PC-9 (cell line): ENCODE measurements at regions of chr17 and their contacts with region 1.

Region 1: GRCh38 chr17:70683936-70684335 is 514.6 kb downstream of the KCNJ2 start:
- DNase-seq: no peak
- H3K4me3 ChIP-seq: no peak overlapping the region
- H3K27ac ChIP-seq: no peak overlapping the region
- H3K4me1 ChIP-seq: peaks cover 12% of the 10 kb centered on the region
- H3K27me3 ChIP-seq: no peaks in the 10 kb centered on the region
- CTCF ChIP-seq: no peak

Region 2: DNA sequence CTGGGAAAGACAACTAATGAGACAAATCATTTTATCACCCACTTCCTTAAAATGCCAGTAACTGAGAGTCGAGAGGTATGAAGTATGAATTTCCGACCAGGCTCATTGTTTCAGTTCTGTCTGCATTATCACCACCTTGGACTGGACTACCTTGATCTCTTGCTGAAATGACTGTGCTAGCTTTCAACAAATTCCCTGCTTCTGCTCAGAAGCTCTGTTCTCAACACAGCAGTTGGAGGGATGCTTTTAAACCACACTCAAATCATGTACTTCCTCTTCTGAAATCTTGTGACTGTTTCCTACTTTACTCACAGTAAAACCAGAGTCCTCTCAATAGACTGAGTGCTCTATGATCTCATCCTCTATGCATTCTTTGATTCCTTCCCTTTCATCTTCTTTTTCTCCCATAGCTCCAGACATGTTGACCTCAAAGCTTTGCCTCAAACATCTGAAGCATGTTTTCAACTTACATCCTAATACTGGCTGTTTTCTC is 318.8 kb before region 1 on chr17:
- CTCF ChIA-PET with region 1: no interaction called
- POLR2A ChIA-PET with region 1: no interaction called
- intact Hi-C with region 1: no loop called
- DNase-seq: no peak
- H3K4me3 ChIP-seq: no peak overlapping the region
- H3K27ac ChIP-seq: no peak overlapping the region
- H3K4me1 ChIP-seq: no peaks in the 10 kb centered on the region
- H3K27me3 ChIP-seq: peaks cover 14% of the 10 kb centered on the region; the same call in 1 of the 2 replicates
- CTCF ChIP-seq: no peak

Region 3: DNA sequence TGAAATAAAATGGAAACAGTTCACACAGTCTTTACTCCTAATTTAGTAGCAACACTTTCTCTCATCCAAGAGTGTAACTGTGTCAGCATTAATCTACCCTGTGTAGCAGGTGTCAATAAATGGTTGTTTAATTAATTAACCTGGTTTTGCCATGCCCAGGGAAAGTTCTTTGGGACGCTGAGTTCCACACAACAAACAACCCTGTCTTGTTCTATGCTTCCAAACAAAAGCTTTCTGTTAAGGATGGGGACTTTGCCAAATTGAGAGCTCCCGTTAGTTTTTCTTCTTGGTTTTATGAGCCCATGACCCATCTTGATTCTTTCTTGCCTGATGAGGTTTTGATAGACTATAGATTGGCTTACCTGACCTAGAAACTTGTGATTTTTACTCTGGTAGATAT is 15.5 kb after region 1 on chr17:
- CTCF ChIA-PET with region 1: interaction called, 3 read pairs
- POLR2A ChIA-PET with region 1: interaction called, 13 read pairs
- intact Hi-C with region 1: no loop called
- DNase-seq: no peak
- H3K4me3 ChIP-seq: no peak overlapping the region
- H3K27ac ChIP-seq: no peak overlapping the region
- H3K4me1 ChIP-seq: no peaks in the 10 kb centered on the region
- H3K27me3 ChIP-seq: no peaks in the 10 kb centered on the region
- CTCF ChIP-seq: no peak

Region 4: GRCh38 chr17:70739065-70739464 is 55.1 kb after region 1 on chr17:
- CTCF ChIA-PET with region 1: no interaction called
- POLR2A ChIA-PET with region 1: no interaction called
- intact Hi-C with region 1: no loop called
- DNase-seq: no peak
- H3K4me3 ChIP-seq: no peak overlapping the region
- H3K27ac ChIP-seq: no peak overlapping the region
- H3K4me1 ChIP-seq: no peaks in the 10 kb centered on the region
- H3K27me3 ChIP-seq: no peaks in the 10 kb centered on the region
- CTCF ChIP-seq: no peak